ENCODE measurements at regions of chr13 and their contacts with region 1.

Region 1: DNA sequence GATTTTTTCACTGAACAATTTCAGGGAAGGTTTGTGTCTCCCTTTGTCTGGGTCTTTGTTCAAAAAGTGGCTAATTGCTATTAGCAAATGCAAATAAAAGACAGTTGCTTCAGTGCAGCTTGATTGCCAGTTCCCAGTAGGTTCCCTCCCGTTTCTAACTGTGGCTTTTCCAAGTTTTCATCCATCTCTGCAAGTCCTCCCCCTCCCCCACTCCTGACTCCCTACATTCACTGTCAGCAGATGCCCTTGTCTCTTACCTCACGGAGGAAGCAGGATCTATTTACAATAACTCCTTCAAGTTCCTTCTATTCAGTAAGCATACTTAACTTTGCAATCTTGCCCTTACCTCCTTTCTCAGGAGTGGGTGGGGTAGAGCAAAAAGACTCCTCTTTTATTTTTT is 55.4 kb upstream of the SCEL start:
- DNase-seq: no peak
- H3K4me3 ChIP-seq: no peak overlapping the region
- H3K27ac ChIP-seq: peak overlapping the region in 1 of 59 donors; percentile 28
- H3K27me3 ChIP-seq: no peaks in the 10 kb centered on the region
- CTCF ChIP-seq: no peak

Region 2: DNA sequence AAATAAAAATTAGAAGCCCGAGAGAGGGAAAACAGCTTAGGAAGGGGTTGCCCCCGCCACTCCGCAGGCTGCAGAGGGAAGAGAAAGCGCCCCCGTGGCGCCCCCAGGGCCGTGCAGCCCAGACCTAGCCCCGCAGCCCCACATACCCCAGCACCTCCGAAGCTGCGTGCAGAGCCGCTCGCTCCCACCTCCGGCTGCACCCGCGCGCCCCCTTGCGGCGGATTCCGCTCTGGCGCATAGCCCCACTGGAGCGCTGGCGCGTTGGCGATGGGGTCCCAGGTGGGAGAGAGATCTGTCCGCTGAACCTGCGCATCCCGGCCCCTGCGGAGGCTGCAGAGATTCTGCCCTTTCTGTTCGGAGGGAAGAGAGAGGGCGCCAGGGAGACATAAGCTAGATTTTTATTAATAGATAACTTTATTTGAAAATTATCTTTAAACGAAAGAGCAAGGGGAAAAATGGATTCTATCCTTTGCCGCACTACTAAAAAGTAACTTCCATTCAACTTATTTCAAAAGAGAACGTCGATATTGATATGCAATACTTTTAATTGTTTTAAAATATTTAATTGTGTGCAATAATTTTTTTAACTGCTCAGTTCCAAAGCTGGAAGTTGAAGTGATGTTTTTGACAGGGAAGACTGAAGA is 499.9 kb before region 1 on chr13:
- intact Hi-C with region 1: loop called in 1 of 2 experiments (anchors 10 kb)
- DNase-seq: peak; percentile 58 to 88 (median 72)
- H3K4me3 ChIP-seq: peak overlapping the region; percentile 14 to 70 (median 52)
- H3K27ac ChIP-seq: no peak overlapping the region
- H3K27me3 ChIP-seq: peaks cover 0 to 5% (median 0%) of the 10 kb centered on the region in 45 donors
- CTCF ChIP-seq: peak; percentile 64 to 98 (median 93)

Measured in dorsolateral prefrontal cortex (tissue), 120 donors.